Endothelial cell of umbilical vein (primary cell): ENCODE measurements at regions of chr16 and their contacts with region 1.

Region 1: DNA sequence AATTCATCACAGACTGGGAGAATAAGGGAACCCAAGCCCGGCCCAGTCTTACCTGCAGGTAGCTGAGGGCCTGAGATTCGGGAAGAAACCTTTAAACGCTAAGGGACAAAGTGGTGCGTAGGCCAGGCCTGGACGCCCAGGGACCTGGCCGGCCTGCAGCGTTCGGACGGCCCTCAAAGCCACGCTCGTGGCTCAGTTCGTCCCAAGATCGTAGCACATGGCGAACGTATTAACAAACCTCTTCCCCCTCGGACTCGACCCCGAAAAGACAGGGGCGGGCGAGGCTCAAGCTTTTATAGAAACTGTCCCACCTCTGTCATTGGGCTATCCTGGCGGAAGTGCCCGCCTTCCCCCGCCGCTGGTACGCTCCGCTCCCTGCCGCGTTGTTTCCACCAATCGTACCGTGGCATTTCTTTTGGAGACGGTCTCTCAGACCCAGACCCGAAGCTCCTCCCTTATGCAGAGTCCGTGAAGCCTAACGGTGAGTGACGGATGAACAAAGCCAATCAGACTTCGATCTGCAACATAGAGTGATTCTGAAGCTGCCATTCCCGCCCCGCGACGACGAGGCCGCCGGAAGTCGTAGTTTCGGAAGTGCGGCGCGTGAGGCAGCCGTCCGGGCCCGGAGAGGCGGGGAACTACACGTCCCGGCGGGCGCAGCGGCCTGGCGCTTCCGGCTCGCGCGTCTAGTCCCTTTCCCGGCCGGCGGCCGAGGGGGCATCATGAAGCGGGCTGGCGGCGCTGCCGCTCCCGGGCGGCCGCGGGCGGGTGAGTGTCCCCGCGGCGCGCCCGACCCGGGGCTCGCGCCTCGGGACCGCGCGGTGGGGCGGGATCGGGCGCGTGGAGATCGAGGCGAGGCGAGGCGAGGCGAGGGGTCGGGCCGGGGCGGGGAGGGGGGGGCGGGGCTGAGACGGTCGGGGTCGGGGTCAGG is at the start of gene TRAF7:
- DNase-seq: peak; percentile 100
- H3K4me3 ChIP-seq: peak within 1 kb of the TSS; percentile 65 to 96 (median 84)
- H3K27ac ChIP-seq: peak within 1 kb of the TSS; percentile 44
- H3K4me1 ChIP-seq: peaks cover 41% of the 10 kb centered on the region
- H3K27me3 ChIP-seq: no peaks in the 10 kb centered on the region
- CTCF ChIP-seq: no peak
- POLR2A ChIP-seq: peak; percentile 100
- total RNA-seq, gene TRAF7: 141 and 159 TPM in 2 replicates

Region 2: DNA sequence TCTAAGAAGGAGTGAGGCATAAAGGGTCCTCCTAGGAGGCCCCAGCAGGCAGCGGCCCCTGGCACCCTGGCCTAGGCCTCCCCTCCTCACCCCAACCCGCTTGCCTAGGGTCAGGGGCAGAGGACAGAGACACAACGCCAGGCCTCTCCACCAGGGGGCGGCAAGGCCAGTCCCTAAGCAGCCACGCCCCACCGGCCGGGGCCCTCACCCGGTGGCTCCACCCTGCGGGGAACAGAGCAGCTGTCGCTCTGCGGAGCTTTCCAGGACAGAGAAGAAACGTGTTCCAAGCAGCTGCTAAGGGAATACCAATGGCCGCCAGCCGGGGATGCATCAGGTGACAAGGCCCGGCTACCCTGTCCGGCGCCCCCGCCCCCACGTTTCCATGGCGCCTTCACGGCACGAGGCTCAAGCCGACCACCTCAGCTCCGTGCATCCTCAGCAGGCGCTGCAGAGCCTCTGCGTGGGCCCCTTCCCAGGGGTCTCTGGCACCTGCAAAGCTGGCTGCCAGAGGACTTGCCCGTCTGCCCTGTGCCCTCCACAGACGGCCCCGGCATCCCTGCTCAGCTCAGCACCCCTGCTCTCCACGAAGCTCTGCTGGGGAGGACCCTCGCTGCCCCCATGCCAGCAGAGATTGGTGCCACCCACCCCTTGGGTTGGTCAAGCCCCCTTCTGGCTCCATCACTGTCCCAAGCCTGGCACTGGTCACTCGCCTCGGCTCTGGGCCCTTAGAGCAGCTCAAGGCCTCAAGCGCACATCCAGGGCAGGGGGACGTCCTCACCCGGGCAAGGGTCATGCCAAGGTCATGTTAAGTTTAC is 151.3 kb before region 1 on chr16:
- CTCF ChIA-PET with region 1: interaction called, 14 read pairs
- POLR2A ChIA-PET with region 1: interaction called, 21 read pairs
- dilution Hi-C with region 1: no loop called
- intact Hi-C with region 1: loop called (anchors 1 kb)
- DNase-seq: peak; percentile 73
- H3K4me3 ChIP-seq: no peak overlapping the region
- H3K27ac ChIP-seq: no peak overlapping the region
- H3K4me1 ChIP-seq: peaks cover 42% of the 10 kb centered on the region
- H3K27me3 ChIP-seq: no peaks in the 10 kb centered on the region
- CTCF ChIP-seq: peak; percentile 97 to 99
- POLR2A ChIP-seq: no peak

Region 3: DNA sequence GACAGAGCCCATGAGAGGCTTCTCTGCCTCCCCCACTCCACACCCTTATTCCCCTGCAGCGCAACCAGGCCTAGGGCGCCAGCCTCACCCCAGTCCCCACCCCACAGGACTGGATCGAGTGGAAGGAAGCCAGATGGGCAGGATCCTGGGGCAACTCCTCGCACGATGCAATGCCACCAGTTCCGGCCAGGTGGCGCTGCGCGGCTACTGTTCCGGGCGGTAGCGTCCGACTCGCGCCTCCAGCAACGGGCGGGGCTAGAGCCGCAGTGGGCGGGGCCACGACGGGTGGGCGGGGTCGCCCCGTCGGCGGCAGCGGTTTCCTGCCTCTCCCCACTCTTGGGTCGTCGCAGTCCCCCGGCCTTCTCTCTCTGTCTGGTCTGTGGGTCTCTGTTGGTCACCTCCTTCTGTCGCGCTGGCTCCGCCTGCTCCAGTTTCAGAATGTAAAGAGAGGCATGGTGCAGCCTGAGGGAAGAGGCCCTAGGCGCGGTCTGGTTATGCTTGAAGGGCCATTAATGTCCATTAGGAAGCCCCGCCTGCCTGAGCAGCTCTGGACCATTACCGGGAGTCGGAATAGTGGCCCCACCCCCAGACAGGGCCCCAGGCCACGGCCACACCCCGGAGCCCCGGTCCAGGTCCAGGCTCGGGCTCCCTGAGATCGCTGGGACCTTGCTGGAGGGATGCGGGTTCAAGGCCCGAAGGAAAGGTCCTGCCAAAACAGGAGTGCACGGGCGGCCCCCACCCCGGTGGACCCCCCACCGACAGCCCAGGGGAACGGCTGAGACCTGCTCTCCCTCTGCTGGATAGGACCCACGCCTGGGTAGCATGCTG is 132.0 kb before region 1 on chr16:
- CTCF ChIA-PET with region 1: interaction called, 8 read pairs
- POLR2A ChIA-PET with region 1: interaction called, 20 read pairs
- dilution Hi-C with region 1: loop called (anchors 25 kb)
- intact Hi-C with region 1: no loop called
- DNase-seq: peak; percentile 92
- H3K4me3 ChIP-seq: peak overlapping the region in 2 of 3 experiments; percentile 20 to 24
- H3K27ac ChIP-seq: peak overlapping the region; percentile 56
- H3K4me1 ChIP-seq: peaks cover 27% of the 10 kb centered on the region
- H3K27me3 ChIP-seq: peaks cover 4 to 11% of the 10 kb centered on the region in 2 experiments
- CTCF ChIP-seq: peak; percentile 94 to 96
- POLR2A ChIP-seq: peak; percentile 37

Region 4: DNA sequence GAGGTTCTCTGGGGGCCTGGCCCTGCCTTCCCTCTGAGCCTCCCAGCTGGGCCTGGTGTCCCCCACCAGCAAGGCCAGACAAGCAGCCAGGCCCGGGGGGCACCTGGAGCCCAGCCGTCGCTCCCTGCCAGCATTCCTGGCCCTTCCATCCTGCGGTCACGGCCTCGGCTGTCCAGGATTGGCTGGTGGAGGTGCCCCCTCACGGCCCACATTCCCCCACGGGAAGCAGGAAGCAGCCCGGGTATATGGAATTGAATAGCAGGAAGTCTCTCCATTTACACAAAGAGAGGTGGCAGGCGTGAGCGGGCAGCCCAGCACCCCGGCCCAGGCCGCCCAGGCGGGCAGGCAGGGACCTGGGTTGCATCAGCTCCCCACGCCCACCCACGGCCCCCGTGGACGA is 14.7 kb after region 1 on chr16:
- CTCF ChIA-PET with region 1: interaction called, 14 read pairs
- POLR2A ChIA-PET with region 1: interaction called, 32 read pairs
- dilution Hi-C with region 1: no loop called
- intact Hi-C with region 1: loop called (anchors 1 kb)
- DNase-seq: peak; percentile 95
- H3K4me3 ChIP-seq: peak overlapping the region; percentile 40 to 71 (median 57)
- H3K27ac ChIP-seq: peak overlapping the region; percentile 99
- H3K4me1 ChIP-seq: peaks cover 24% of the 10 kb centered on the region
- H3K27me3 ChIP-seq: no peaks in the 10 kb centered on the region
- CTCF ChIP-seq: peak in 1 of 2 donors; percentile 2
- POLR2A ChIP-seq: peak; percentile 91

Region 5: DNA sequence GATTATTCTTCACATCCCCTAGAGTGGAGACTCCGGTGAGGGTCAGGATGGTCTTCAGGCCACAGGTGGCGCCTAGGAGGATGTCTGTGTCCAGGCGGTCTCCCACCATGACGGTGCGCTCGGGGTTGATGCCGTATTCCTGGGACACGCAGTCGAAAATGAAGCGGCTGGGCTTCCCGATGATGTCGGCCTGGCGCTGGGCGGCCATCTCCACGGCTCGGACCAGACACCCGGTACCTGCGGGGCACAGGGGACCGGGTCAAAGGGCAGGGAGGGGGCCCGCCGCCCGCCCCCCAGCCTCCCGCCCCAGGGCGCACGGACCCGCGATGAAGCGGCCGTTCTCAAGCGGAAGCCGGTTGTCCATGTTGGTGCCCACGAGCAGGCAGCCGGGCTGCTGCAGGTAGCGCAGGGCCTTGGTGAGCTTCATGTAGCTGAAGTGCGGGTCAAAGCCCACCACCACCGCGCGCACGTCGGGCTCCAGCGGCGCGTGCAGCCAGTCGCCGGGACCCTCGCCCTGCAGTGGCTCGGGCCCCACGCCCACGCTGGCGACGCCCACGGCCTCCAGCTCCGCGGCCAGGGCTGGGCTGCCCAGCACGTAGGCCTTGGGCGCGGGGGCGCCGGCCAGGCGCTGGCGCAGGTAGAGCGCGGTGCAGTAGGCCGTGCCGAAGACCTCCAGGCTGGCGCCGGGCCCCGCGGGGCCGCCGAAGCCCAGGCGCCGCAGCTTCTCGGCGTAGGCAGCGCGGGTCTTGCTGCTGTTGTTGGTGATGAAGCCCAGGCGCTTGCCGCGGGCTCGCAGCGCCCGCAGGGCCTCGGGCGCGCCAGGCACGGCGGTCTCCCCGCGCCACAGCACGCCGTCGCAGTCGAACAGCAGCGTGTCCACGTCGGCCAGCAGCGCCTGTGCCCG is 58.7 kb after region 1 on chr16:
- CTCF ChIA-PET with region 1: no interaction called
- POLR2A ChIA-PET with region 1: interaction called, 15 read pairs
- dilution Hi-C with region 1: no loop called
- intact Hi-C with region 1: loop called (anchors 2 kb)
- DNase-seq: peak; percentile 34
- H3K4me3 ChIP-seq: peak overlapping the region; percentile 74 to 75 (median 74)
- H3K27ac ChIP-seq: peak overlapping the region; percentile 50
- H3K4me1 ChIP-seq: peaks cover 15% of the 10 kb centered on the region
- H3K27me3 ChIP-seq: no peaks in the 10 kb centered on the region
- CTCF ChIP-seq: no peak
- POLR2A ChIP-seq: peak; percentile 11